ENCODE measurements at regions of chr1 and their contacts with region 1.

Region 1: GRCh38 chr1:15835741-15836510 is 11.6 kb upstream of the SPEN start:
- DNase-seq: peak; percentile 91 to 100 (median 95)
- ATAC-seq: peak; percentile 66
- H3K4me3 ChIP-seq: peak overlapping the region; percentile 65
- H3K27ac ChIP-seq: peak overlapping the region; percentile 99
- H3K4me1 ChIP-seq: peaks cover 4 to 45% of the 10 kb centered on the region in 2 experiments
- H3K27me3 ChIP-seq: no peaks in the 10 kb centered on the region
- CTCF ChIP-seq: no peak
- EP300 ChIP-seq: peak; percentile 33
- POLR2A ChIP-seq: peak; percentile 96
- RAD21 ChIP-seq: no peak

Region 2: DNA sequence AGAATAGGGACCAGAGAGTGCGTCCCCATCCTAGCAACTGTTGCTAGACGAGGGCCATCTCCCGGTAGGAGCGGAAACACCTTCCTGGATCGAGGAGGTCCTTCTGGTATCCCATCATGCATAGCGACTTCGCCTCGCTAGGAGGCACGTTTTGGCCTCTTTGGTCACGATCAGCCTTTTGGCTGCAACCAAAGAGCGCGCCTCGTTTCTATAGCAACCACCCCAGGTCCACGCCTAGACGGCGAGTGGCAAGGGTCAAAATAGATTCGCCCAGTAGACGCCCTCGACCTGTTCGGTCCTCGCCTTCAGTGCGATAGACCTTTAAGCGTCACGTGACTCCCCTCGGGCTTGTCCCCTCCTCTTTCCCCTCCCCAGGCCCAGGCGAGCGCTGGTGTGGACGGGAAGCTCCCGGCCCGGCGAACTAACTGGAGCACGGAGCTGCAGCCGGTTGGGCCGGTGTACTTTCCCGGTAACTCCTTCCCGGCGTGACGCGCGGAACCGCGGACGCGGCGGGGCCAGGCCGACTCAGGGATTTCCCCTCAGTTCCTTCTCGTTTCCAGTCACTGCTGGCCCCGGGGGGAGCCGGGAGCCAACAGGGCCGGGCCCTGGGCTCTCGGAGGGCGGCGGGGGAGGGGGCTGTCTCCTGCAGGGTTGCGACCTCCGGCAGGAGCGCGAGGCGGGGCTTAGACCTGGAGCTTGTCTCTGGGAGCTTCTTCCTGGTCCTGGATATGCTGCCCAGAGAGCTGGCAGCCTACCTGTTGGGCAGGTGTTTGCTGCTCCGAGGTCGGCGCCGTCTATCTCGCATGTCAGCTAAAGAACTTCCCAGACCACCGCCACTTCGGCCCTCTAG is 309.2 kb before region 1 on chr1 and contains the start of gene DNAJC16:
- CTCF ChIA-PET with region 1: no interaction called
- POLR2A ChIA-PET with region 1: no interaction called
- in situ Hi-C with region 1: no loop called
- intact Hi-C with region 1: loop called (anchors 10 kb)
- DNase-seq: peak; percentile 92 to 100 (median 93)
- ATAC-seq: peak; percentile 83
- H3K4me3 ChIP-seq: peak within 1 kb of the TSS; percentile 77
- H3K27ac ChIP-seq: peak within 1 kb of the TSS; percentile 77
- H3K4me1 ChIP-seq: peaks cover 7 to 25% of the 10 kb centered on the region in 2 experiments; a peak in 4 of 5 replicates
- H3K27me3 ChIP-seq: no peaks in the 10 kb centered on the region
- CTCF ChIP-seq: peak; percentile 31 to 63 (median 57); a peak in 4 of 6 replicates
- EP300 ChIP-seq: peak; percentile 34
- POLR2A ChIP-seq: peak; percentile 97
- RAD21 ChIP-seq: no peak
- polyA plus RNA-seq, gene DNAJC16: 6.9 to 8.6 TPM

Region 3: GRCh38 chr1:15796086-15796462 is 39.9 kb before region 1 on chr1:
- CTCF ChIA-PET with region 1: no interaction called
- POLR2A ChIA-PET with region 1: interaction called, 23 read pairs
- in situ Hi-C with region 1: no loop called
- intact Hi-C with region 1: no loop called
- DNase-seq: peak in 1 of 4 experiments; percentile 10
- ATAC-seq: no peak
- H3K4me3 ChIP-seq: no peak overlapping the region
- H3K27ac ChIP-seq: peak overlapping the region; percentile 58; the same call in 2 of the 3 replicates
- H3K4me1 ChIP-seq: peaks cover 50 to 57% of the 10 kb centered on the region in 2 experiments
- H3K27me3 ChIP-seq: no peaks in the 10 kb centered on the region
- CTCF ChIP-seq: no peak
- EP300 ChIP-seq: no peak
- POLR2A ChIP-seq: no peak
- RAD21 ChIP-seq: no peak

Region 4: DNA sequence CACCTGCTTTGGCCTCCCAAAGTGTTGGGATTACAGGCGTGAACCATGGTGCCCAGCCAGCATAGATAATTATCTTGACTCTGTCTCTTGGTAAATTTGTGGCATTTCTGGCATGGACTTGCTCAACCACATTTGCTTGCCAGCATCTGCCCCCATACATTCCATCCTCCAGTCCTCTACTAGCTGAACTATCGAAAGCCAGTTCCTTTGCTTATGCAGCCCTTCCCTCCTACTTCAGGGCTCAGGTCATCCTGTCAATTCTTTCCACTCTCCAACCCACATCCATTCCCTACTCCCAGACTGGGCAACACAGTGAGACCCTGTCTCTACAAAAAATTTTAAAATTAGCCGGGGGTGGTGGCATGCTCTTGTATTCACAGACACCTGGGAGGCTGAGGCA is 15.4 kb before region 1 on chr1:
- CTCF ChIA-PET with region 1: no interaction called
- POLR2A ChIA-PET with region 1: interaction called, 61 read pairs
- in situ Hi-C with region 1: no loop called
- intact Hi-C with region 1: loop called (anchors 2 kb)
- DNase-seq: no peak
- ATAC-seq: no peak
- H3K4me3 ChIP-seq: no peak overlapping the region
- H3K27ac ChIP-seq: no peak overlapping the region
- H3K4me1 ChIP-seq: no peaks in the 10 kb centered on the region; a peak in 3 of 5 replicates
- H3K27me3 ChIP-seq: no peaks in the 10 kb centered on the region
- CTCF ChIP-seq: no peak
- EP300 ChIP-seq: no peak
- POLR2A ChIP-seq: no peak
- RAD21 ChIP-seq: no peak

Region 5: GRCh38 chr1:15825800-15826199 is 10.1 kb before region 1 on chr1:
- CTCF ChIA-PET with region 1: no interaction called
- POLR2A ChIA-PET with region 1: interaction called, 43 read pairs
- in situ Hi-C with region 1: no loop called
- intact Hi-C with region 1: no loop called
- DNase-seq: no peak
- ATAC-seq: no peak
- H3K4me3 ChIP-seq: no peak overlapping the region
- H3K27ac ChIP-seq: no peak overlapping the region
- H3K4me1 ChIP-seq: peaks cover 10 to 14% of the 10 kb centered on the region in 2 experiments; a peak in 4 of 5 replicates
- H3K27me3 ChIP-seq: no peaks in the 10 kb centered on the region
- CTCF ChIP-seq: no peak
- EP300 ChIP-seq: no peak
- POLR2A ChIP-seq: no peak
- RAD21 ChIP-seq: no peak

Region 6: GRCh38 chr1:15847100-15847892 is 11.4 kb after region 1 on chr1 and contains the start of gene SPEN:
- CTCF ChIA-PET with region 1: interaction called, 3 read pairs
- POLR2A ChIA-PET with region 1: interaction called, 133 read pairs
- in situ Hi-C with region 1: no loop called
- intact Hi-C with region 1: loop called (anchors 1 kb)
- DNase-seq: peak; percentile 95 to 100 (median 96)
- ATAC-seq: peak; percentile 87
- H3K4me3 ChIP-seq: peak within 1 kb of the TSS; percentile 62
- H3K27ac ChIP-seq: peak within 1 kb of the TSS; percentile 97
- H3K4me1 ChIP-seq: peaks cover 6 to 32% of the 10 kb centered on the region in 2 experiments
- H3K27me3 ChIP-seq: no peaks in the 10 kb centered on the region
- CTCF ChIP-seq: 0 out of 6 replicates have a peak, but pooled peaks of 2 of the 3 experiments have one; percentile 5 to 13
- EP300 ChIP-seq: no peak; the same call in none of the 2 replicates
- POLR2A ChIP-seq: peak; percentile 94
- RAD21 ChIP-seq: 0 out of 4 replicates have a peak, but pooled peaks have one; percentile 5 to 7
- polyA plus RNA-seq, gene SPEN: 5.7 to 13.1 TPM

Region 7: DNA sequence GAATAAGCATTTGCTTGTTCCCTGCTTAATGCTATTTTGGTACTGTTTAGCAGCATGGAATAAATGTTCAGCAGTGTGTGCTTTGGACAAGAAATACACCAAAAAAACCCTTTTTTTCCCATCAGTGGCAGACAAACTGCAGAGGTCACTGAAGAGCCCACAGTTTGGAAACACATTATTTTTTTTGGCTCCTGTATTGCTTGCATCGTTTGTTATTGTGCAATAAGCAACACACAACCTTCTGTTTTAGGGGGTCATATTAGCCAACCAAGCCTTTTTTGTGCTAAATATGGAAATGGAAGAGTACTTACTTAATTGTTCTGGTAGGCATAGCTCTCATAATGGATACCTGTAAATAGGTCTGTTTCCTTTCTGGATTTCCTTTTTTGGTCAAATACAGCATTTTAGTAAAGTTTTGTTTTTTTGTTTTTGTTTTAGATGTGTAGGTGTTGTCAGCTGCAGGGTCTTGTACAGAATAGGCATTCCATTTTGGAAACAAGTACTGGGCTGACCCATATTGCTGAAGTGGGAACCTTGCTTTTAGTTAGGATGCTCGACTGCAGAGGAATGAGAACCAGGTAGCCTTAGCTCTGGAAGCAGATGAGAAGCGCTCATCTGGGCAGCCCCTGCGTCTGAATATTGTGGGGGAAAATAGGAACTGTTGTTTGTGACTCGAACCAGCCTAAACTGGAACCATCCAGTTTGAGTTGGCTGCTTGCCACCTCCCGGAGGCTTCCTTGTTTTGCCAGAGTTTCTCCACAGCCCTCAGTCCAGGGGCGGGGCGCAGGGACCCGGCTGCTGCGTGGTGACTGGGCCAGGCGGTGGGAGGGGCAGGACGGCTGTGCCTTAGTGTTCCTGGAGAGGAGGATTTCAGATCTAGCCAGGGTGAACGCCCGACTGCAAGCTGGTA is 50.0 kb after region 1 on chr1:
- CTCF ChIA-PET with region 1: no interaction called
- POLR2A ChIA-PET with region 1: interaction called, 6 read pairs
- in situ Hi-C with region 1: no loop called
- intact Hi-C with region 1: loop called (anchors 5 kb)
- DNase-seq: peak; percentile 85 to 97 (median 91)
- ATAC-seq: peak; percentile 97
- H3K4me3 ChIP-seq: peak overlapping the region; percentile 24
- H3K27ac ChIP-seq: peak overlapping the region; percentile 85
- H3K4me1 ChIP-seq: peaks cover 14 to 23% of the 10 kb centered on the region in 2 experiments; a peak in 4 of 5 replicates
- H3K27me3 ChIP-seq: no peaks in the 10 kb centered on the region
- CTCF ChIP-seq: peak in 2 of 3 experiments; percentile 4 to 36; a peak in 3 of 6 replicates
- EP300 ChIP-seq: peak; percentile 84
- POLR2A ChIP-seq: peak; percentile 70
- RAD21 ChIP-seq: 0 out of 4 replicates have a peak, but pooled peaks of 1 of the 2 experiments have one; percentile 6

Measured in K562 (cell line).